ENCODE measurements at regions of chr9 and their contacts with region 1.

Region 1: DNA sequence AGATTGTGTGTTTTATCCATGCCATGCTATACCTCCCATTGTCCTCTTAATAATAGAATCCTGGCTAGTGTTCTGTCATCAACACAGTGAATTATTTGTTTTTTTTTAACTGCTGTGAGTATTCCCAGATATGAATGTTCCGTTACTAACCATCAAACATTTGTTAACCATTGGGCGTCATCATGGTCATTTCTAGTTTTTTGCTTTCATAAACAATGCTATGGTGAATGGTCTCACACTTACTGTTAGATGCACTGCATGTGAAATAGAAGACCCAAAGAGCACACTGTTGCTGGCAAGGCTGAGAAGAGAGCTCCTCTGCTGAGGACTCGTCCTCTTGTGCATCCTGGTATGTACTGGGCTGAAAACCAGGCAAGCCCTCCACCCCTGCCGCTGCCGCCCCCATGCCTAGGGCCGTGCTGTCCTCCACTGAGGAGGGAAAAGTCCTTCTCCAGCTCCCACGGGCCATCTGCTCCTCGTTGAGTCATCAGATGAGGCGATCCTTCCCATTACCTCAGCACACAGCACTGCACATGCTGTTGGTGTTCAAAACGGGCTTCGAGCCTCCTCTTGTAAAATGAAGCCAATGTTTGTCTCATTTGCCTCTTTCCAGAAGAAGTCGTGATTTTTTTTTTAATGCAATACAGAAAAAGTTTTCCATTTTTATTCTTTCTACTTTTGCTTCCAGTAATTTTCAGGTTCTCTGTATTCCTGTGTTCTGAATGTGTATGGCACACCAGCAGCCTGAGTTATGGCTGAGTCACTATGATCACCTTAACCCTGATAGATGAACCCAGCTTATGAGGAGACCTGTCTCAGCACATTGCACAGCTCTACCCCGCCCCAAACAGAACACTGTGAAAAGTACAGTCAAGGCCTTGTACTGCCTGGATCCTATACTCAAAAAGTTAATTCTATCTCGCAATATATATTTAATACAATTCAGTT is 219.0 kb downstream of the AOPEP start:
- DNase-seq: peak; percentile 82
- H3K4me3 Mint-ChIP-seq: peak overlapping the region; percentile 33
- H3K27ac Mint-ChIP-seq: peak overlapping the region; percentile 86
- H3K4me1 Mint-ChIP-seq: peaks cover 56% of the 10 kb centered on the region
- H3K27me3 Mint-ChIP-seq: no peaks in the 10 kb centered on the region
- CTCF ChIP-seq: no peak

Region 2: DNA sequence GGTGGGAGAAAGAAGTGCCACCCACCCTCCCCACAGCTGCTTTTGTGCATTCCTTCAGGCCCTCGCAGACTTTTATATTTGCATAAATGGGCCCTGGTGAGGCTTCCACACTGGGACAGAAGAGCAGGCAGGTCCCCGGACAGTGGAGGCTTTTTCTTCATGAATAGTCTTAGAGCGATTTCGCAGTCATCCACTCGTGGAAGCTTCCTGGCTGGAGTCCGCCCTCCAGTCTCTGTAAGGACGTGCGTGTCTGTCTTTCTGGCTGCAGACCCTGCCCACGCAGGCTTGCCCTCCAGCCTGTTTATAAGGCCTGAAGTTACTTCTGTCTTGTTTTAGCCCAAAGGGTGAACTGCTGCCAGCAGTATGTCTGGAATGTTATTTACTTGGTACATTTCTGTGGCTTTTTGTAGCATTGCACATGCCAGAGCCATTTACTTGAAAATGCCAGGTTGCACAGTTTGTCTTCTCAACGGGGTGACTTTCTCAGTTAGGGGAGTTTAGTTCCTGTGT is 23.3 kb before region 1 on chr9:
- CTCF ChIA-PET with region 1: interaction called, 5 read pairs
- POLR2A ChIA-PET with region 1: interaction called, 13 read pairs
- intact Hi-C with region 1: no loop called
- DNase-seq: peak; percentile 82
- H3K4me3 Mint-ChIP-seq: peak overlapping the region; percentile 43
- H3K27ac Mint-ChIP-seq: peak overlapping the region; percentile 85
- H3K4me1 Mint-ChIP-seq: peaks cover 75% of the 10 kb centered on the region
- H3K27me3 Mint-ChIP-seq: no peaks in the 10 kb centered on the region
- CTCF ChIP-seq: no peak

Region 3: DNA sequence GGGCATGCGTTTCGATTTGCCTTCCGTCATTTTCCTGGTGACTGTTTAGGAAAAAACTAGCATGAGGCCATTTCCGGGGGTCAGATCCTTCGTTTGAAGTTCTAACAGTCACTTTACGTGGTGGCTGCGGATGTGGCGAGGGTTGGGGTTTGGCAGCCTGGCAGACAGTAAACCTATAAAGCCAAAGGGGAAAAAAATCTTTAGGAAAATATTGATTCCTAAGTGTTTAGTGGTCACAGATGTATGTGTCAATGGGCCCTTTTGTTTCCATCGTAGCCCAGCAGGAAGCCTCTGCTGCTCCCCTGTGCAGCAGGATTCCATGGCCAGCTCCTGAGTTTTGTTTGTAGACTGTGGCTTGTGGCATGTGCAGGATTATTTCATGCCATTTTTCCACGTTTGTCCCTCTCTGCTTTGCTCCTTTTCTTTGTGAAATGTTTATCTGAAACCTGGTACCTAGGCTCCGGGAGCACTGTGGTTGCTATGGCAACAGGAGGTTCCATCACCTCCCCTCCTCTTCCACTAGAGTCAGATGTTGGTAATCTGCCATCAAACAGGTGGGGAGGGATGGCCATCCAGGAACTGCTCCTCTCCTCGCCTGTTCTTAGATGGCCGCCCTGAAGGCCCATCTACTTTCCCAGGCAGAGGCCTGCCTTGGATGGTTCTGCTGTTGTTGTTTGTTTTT is 16.6 kb before region 1 on chr9:
- CTCF ChIA-PET with region 1: interaction called, 5 read pairs
- POLR2A ChIA-PET with region 1: interaction called, 13 read pairs
- intact Hi-C with region 1: no loop called
- DNase-seq: no peak
- H3K4me3 Mint-ChIP-seq: peak overlapping the region; percentile 6
- H3K27ac Mint-ChIP-seq: peak overlapping the region; percentile 89
- H3K4me1 Mint-ChIP-seq: peaks cover 56% of the 10 kb centered on the region
- H3K27me3 Mint-ChIP-seq: no peaks in the 10 kb centered on the region
- CTCF ChIP-seq: no peak